ENCODE measurements at regions of chr12 and their contacts with region 1.

Region 1: DNA sequence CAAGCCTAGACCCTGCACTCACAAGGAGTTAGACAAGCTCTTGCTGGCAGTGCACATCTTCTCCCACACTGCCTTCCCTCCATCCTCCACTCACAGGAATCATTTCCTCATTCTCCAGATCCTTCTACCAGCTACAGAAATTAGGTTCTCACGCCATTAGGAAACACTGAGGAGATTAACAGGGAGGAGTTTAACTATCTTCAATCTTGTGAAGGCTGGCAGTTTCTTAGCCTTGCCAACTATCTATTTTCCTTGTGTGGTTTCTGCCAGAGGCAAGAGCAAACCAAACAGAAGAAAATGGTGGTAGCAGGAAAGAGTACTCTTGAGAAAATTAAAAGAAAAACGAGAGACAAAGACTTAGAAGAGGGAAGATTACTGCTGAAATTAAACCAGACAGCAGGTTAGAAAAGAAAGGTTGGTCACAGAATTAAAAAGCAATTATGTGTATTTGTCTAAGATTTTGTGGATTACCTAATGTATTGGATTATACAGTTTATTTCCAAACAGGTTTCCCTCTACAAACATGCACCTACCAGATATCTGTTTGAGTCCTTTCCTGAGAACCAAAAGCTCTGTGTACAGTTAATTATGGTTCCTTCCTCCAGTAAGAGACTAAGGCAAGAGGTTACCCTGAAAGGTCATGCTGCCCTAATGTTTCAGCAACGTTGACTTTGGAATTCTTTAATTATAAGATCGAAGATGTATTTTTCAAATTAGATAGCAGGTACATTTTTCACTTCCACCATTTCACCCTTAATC is 5.0 kb downstream of the RERG start:
- H3K4me3 Mint-ChIP-seq: no peak overlapping the region
- H3K27ac Mint-ChIP-seq: no peak overlapping the region
- H3K4me1 Mint-ChIP-seq: peaks cover 8% of the 10 kb centered on the region
- H3K27me3 Mint-ChIP-seq: peaks cover 14% of the 10 kb centered on the region

Region 2: GRCh38 chr12:15074351-15074750 is 141.9 kb before region 1 on chr12:
- intact Hi-C with region 1: no loop called
- H3K4me3 Mint-ChIP-seq: no peak overlapping the region
- H3K27ac Mint-ChIP-seq: no peak overlapping the region
- H3K4me1 Mint-ChIP-seq: peaks cover 6% of the 10 kb centered on the region
- H3K27me3 Mint-ChIP-seq: no peaks in the 10 kb centered on the region

Region 3: GRCh38 chr12:15151161-15152120 is 64.8 kb before region 1 on chr12:
- intact Hi-C with region 1: loop called (anchors 5 kb)
- H3K4me3 Mint-ChIP-seq: no peak overlapping the region
- H3K27ac Mint-ChIP-seq: no peak overlapping the region
- H3K4me1 Mint-ChIP-seq: no peaks in the 10 kb centered on the region
- H3K27me3 Mint-ChIP-seq: no peaks in the 10 kb centered on the region

Region 4: GRCh38 chr12:15186597-15186996 is 29.6 kb before region 1 on chr12:
- intact Hi-C with region 1: no loop called
- H3K4me3 Mint-ChIP-seq: no peak overlapping the region
- H3K27ac Mint-ChIP-seq: no peak overlapping the region
- H3K4me1 Mint-ChIP-seq: peaks cover 6% of the 10 kb centered on the region
- H3K27me3 Mint-ChIP-seq: no peaks in the 10 kb centered on the region

Region 5: DNA sequence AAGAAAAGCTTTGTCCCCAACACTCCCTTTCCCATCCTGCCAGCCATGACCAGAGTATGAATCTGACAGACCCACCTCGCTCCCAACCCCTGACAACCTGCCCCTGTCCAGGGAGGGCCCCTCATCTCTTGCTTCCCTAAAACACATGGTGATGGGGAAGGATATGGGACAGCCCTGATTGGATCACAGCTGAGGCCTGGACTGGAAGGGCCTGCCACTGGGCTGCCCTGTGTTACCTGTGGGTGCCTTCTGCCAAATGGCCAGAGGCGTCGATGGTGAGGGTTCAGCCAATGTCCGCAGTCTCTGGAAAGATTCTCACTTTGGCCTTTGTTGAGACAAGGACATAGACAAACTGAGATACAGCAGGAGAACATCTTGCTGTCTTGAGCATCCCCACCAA is 18.3 kb after region 1 on chr12:
- intact Hi-C with region 1: no loop called
- H3K4me3 Mint-ChIP-seq: no peak overlapping the region
- H3K27ac Mint-ChIP-seq: no peak overlapping the region
- H3K4me1 Mint-ChIP-seq: no peaks in the 10 kb centered on the region
- H3K27me3 Mint-ChIP-seq: peaks cover 23% of the 10 kb centered on the region

Region 6: GRCh38 chr12:15644700-15645099 is 428.5 kb after region 1 on chr12:
- intact Hi-C with region 1: no loop called
- H3K4me3 Mint-ChIP-seq: no peak overlapping the region
- H3K27ac Mint-ChIP-seq: no peak overlapping the region
- H3K4me1 Mint-ChIP-seq: no peaks in the 10 kb centered on the region
- H3K27me3 Mint-ChIP-seq: no peaks in the 10 kb centered on the region

Measured in dendritic cell treated with granulocyte-macrophage colony-stimulating factor and Interleukin-4, amounts not matched to agents 40 ng/mL and 50 ng/mL, for 4 days (primary cell).